Mammary epithelial cell (primary cell): ENCODE measurements at regions of chr1 and their contacts with region 1.

Region 1: GRCh38 chr1:205329719-205330118 is 8.2 kb upstream of the NUAK2 start:
- DNase-seq: no peak
- H3K4me3 ChIP-seq: no peak overlapping the region
- H3K27ac ChIP-seq: no peak overlapping the region
- H3K4me1 ChIP-seq: peaks cover 7% of the 10 kb centered on the region
- H3K27me3 ChIP-seq: no peaks in the 10 kb centered on the region
- CTCF ChIP-seq: no peak

Region 2: DNA sequence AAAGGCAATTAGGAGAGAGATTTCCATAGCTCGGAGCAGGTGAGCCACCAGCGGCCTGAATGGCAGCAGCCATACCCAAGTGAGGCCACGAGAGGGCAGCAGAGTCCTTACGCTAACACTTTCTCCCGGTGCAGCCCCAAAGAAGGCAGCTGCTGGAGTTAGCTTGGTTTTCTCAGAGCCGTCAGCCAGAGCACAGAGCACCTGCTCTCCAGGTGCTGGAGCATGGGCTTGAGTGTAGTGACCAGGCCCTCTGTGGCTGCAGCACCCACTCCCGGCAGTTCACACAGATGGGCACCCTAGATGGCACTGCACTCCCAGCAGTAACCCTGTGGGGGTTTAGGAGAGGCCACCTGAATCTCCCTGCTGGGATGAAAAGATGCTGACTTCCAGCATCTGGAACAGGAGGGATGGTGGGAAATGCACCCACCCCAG is 56.2 kb before region 1 on chr1:
- CTCF ChIA-PET with region 1: interaction called, 37 read pairs
- dilution Hi-C with region 1: loop called (anchors 5 kb)
- in situ Hi-C with region 1: loop called (anchors 5 kb)
- intact Hi-C with region 1: loop called (anchors 1 kb)
- DNase-seq: peak; percentile 65
- H3K4me3 ChIP-seq: no peak overlapping the region
- H3K27ac ChIP-seq: no peak overlapping the region
- H3K4me1 ChIP-seq: peaks cover 29% of the 10 kb centered on the region
- H3K27me3 ChIP-seq: no peaks in the 10 kb centered on the region
- CTCF ChIP-seq: peak; percentile 99

Region 3: GRCh38 chr1:205359771-205360565 is 30.2 kb after region 1 on chr1:
- CTCF ChIA-PET with region 1: no interaction called
- dilution Hi-C with region 1: no loop called
- in situ Hi-C with region 1: no loop called
- intact Hi-C with region 1: no loop called
- DNase-seq: no peak
- H3K4me3 ChIP-seq: no peak overlapping the region
- H3K27ac ChIP-seq: no peak overlapping the region
- H3K4me1 ChIP-seq: peaks cover 7% of the 10 kb centered on the region
- H3K27me3 ChIP-seq: no peaks in the 10 kb centered on the region
- CTCF ChIP-seq: no peak